ENCODE measurements at regions of chrX and their contacts with region 1.

Region 1: GRCh38 chrX:101390664-101391525 is at the start of gene RPL36A:
- DNase-seq: peak; percentile 92
- H3K4me3 ChIP-seq: peak within 1 kb of the TSS; percentile 24 to 53 (median 50)
- H3K27ac ChIP-seq: peak within 1 kb of the TSS; percentile 71 to 85 (median 76)
- H3K4me1 ChIP-seq: peaks cover 0 to 8% (median 0%) of the 10 kb centered on the region in 4 donors
- H3K27me3 ChIP-seq: no peaks in the 10 kb centered on the region
- CTCF ChIP-seq: peak in 3 of 4 experiments; percentile 32 to 53 (median 49)
- EP300 ChIP-seq: no peak
- POLR2A ChIP-seq: peak; percentile 71 to 75
- total RNA-seq, gene RPL36A: 753 to 2,539 (median 1,366) TPM

Region 2: GRCh38 chrX:101348452-101349192 is 42.3 kb before region 1 on chrX and contains the start of gene TIMM8A:
- intact Hi-C with region 1: loop called (anchors 5 kb)
- DNase-seq: peak; percentile 89
- H3K4me3 ChIP-seq: peak within 1 kb of the TSS; percentile 62 to 68 (median 64)
- H3K27ac ChIP-seq: peak within 1 kb of the TSS; percentile 79 to 91 (median 88)
- H3K4me1 ChIP-seq: peaks cover 0 to 8% (median 7%) of the 10 kb centered on the region in 4 donors
- H3K27me3 ChIP-seq: no peaks in the 10 kb centered on the region
- CTCF ChIP-seq: no peak
- EP300 ChIP-seq: no peak
- POLR2A ChIP-seq: peak in 1 of 2 donors; percentile 19
- total RNA-seq, gene TIMM8A: 3.0 to 7.1 (median 4.6) TPM

Region 3: DNA sequence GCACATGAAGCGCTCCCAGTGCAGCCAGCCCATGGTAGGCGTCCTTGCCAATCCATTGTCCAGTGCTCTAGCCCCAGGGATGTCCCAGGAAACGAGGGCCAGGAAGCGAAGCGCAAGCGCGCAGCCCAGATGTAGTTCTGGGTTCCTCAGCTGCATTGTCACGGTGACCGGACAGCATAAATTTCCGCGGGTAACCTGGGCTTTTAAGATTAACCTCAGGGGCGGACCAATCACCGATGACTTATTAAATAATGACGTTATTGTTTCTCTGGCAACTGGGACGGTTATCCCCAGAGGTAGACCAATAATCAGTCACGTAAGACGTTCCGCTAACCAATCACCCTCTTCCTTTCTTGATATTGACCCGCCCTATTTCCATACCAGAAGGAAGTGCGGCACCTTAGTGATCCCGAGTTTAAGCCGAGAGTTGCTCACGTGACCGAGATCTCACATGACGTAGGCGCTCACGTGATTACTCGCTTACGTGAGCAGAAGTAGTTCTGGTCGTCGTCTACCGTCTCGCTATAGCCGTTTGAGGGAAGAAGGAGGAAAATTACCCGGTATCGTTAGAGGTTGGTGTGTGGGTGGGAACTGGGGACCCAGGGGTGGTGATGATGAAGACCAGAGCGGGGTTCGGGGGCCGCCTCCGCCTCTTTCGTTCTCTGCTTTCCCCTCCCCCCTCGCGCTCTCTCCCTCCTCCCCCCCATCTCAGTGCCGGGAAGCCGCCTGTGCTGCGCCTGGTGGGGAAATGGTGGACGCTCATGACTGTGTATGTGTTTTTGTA is 17.0 kb after region 1 on chrX and contains the starts of genes GLA and HNRNPH2:
- intact Hi-C with region 1: loop called (anchors 2 kb)
- DNase-seq: peak; percentile 96
- H3K4me3 ChIP-seq: peak within 1 kb of the TSS; percentile 48 to 64 (median 61)
- H3K27ac ChIP-seq: peak within 1 kb of the TSS; percentile 88 to 91 (median 90)
- H3K4me1 ChIP-seq: peaks cover 0 to 39% (median 12%) of the 10 kb centered on the region in 4 donors
- H3K27me3 ChIP-seq: no peaks in the 10 kb centered on the region
- CTCF ChIP-seq: peak in 1 of 4 experiments; percentile 21
- EP300 ChIP-seq: peak in 3 of 4 donors; percentile 49 to 70 (median 67)
- POLR2A ChIP-seq: peak; percentile 84 to 93
- total RNA-seq, gene GLA: 9.7 to 15.3 (median 13.0) TPM
- total RNA-seq, gene HNRNPH2: 38.8 to 51.0 (median 47.2) TPM

Measured in sigmoid colon (tissue), 7 donors.